Upper lobe of right lung (tissue), 1 donor: ENCODE measurements at regions of chr11 and their contacts with region 1.

Region 1: GRCh38 chr11:63838678-63839507 is at the start of gene MARK2:
- DNase-seq: peak; percentile 98
- ATAC-seq: peak; percentile 93
- H3K4me3 ChIP-seq: peak within 1 kb of the TSS; percentile 68
- H3K27ac ChIP-seq: peak within 1 kb of the TSS; percentile 81
- H3K4me1 ChIP-seq: peaks cover 46% of the 10 kb centered on the region
- H3K27me3 ChIP-seq: no peaks in the 10 kb centered on the region
- CTCF ChIP-seq: no peak
- total RNA-seq, gene MARK2: 40.7 TPM

Region 2: GRCh38 chr11:63783925-63784592 is 54.8 kb before region 1 on chr11:
- intact Hi-C with region 1: no loop called
- DNase-seq: no peak
- ATAC-seq: peak; percentile 76
- H3K4me3 ChIP-seq: no peak overlapping the region
- H3K27ac ChIP-seq: peak overlapping the region; percentile 47
- H3K4me1 ChIP-seq: no peaks in the 10 kb centered on the region
- H3K27me3 ChIP-seq: no peaks in the 10 kb centered on the region
- CTCF ChIP-seq: no peak

Region 3: DNA sequence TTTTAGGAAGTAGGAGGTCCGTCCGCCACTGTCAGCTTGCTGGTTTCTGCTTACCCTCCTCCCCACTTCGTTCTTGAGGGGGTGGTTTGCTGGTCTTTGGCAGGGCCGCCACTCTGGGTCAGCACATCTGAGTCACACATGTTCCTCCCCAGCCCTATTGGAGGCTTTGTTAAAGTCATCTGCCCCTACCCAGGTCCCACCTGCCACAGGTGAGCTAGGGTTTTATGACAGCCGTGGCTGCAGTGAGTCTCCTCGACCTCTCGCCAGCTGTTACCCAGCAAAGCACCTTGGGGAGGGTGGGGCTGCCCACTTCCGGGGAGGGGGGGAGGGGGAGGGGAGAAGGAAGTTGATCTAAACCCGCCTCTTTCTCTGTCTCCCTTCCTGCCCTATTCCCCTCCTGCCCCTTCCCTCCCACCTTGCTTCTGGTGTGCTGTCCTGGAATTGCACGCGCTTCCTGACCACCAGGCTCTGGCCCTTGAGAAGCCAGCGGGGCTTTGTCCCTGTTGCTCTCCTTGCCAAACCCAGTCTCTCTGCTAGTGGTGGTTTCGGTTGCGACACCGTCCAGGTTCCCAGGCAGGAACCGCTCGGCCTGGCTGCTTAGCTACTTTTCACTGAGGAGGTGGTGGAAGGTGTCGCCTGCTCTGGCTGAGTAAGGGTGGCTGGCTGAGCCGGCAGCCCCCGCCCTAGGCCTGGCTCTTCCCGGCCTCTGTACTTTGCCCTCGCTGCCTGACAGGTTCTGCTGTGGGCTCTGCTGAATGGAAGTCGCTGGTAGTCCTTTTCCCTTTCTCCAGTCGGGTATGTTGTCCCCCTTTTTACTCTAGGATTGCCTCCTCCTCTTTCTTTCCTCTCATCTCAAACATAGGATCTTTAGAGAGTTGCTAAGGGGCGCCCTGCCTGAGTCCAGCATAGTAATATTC is 49.5 kb after region 1 on chr11:
- intact Hi-C with region 1: no loop called
- DNase-seq: peak; percentile 90
- ATAC-seq: peak; percentile 86
- H3K4me3 ChIP-seq: peak overlapping the region; percentile 45
- H3K27ac ChIP-seq: peak overlapping the region; percentile 79
- H3K4me1 ChIP-seq: peaks cover 44% of the 10 kb centered on the region
- H3K27me3 ChIP-seq: no peaks in the 10 kb centered on the region
- CTCF ChIP-seq: no peak

Region 4: DNA sequence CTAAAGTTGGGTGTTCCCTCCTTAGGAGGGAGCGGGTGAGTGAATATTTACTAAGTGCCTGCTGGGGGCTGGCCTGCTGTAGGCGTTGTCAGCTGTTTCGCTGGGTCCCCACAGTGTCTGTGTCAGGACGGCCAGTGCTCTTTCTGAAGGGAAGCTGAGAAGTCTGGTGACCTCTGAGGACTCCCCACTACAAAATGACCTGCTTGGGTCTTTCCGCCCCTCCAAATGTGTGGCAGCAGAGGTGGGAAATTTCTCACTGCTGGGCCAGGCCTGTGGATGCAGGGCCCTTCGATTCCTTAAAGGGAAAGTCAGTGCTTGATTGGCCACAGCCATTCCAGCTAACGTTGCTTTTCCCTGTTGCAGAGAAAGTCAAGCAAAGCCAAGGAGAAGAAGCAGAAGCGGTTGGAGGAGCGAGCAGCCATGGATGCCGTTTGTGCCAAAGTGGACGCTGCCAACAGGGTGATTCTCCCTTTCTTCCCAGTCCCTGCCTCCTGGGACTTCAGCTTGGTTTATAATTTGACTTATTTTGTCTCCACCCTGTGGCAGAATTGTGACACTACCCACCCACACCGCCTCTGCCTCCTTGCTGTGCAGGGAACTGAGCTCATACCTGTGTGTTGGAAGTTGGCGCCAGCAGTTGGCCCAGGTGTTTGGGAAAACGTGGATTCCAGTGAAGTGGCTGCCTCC is 106.7 kb after region 1 on chr11:
- intact Hi-C with region 1: loop called (anchors 5 kb)
- DNase-seq: peak; percentile 71
- ATAC-seq: peak; percentile 96
- H3K4me3 ChIP-seq: no peak overlapping the region
- H3K27ac ChIP-seq: peak overlapping the region; percentile 11
- H3K4me1 ChIP-seq: no peaks in the 10 kb centered on the region
- H3K27me3 ChIP-seq: no peaks in the 10 kb centered on the region
- CTCF ChIP-seq: peak; percentile 80